Vagina (tissue), 2 donors: ENCODE measurements at regions of chr17 and their contacts with region 1.

Region 1: GRCh38 chr17:30271102-30271501 is 20.6 kb downstream of the BLMH start:
- DNase-seq: no peak
- H3K4me3 ChIP-seq: no peak overlapping the region
- H3K27ac ChIP-seq: no peak overlapping the region
- H3K4me1 ChIP-seq: no peaks in the 10 kb centered on the region
- H3K27me3 ChIP-seq: no peaks in the 10 kb centered on the region
- CTCF ChIP-seq: no peak
- POLR2A ChIP-seq: no peak

Region 2: DNA sequence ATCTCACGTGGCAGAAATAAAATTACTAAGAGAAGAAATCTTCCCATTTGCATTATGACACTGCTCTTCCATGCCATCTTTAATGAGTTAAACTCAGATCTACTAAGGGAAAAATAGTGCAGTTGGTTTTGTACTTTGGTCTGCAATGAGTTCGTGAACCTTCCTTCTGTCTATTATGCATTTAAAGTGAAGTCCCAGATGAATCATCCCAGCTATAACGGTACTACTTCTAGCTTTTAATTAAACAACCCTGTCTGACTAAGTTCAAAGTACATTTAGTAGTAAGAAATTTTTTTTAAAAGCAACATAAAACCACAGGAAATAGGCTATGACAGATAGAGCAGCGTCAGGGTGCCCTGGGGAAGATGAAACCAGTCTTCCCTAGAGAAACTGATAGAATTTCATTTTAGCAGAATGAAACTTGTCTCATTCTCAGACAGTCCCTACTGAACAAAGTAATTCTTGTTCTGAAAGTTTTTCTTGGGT is 61.0 kb after region 1 on chr17:
- intact Hi-C with region 1: loop called (anchors 2 kb)
- DNase-seq: no peak
- H3K4me3 ChIP-seq: no peak overlapping the region
- H3K27ac ChIP-seq: no peak overlapping the region
- H3K4me1 ChIP-seq: no peaks in the 10 kb centered on the region
- H3K27me3 ChIP-seq: no peaks in the 10 kb centered on the region
- CTCF ChIP-seq: no peak
- POLR2A ChIP-seq: no peak